ENCODE measurements at regions of chr19 and their contacts with region 1.

Region 1: DNA sequence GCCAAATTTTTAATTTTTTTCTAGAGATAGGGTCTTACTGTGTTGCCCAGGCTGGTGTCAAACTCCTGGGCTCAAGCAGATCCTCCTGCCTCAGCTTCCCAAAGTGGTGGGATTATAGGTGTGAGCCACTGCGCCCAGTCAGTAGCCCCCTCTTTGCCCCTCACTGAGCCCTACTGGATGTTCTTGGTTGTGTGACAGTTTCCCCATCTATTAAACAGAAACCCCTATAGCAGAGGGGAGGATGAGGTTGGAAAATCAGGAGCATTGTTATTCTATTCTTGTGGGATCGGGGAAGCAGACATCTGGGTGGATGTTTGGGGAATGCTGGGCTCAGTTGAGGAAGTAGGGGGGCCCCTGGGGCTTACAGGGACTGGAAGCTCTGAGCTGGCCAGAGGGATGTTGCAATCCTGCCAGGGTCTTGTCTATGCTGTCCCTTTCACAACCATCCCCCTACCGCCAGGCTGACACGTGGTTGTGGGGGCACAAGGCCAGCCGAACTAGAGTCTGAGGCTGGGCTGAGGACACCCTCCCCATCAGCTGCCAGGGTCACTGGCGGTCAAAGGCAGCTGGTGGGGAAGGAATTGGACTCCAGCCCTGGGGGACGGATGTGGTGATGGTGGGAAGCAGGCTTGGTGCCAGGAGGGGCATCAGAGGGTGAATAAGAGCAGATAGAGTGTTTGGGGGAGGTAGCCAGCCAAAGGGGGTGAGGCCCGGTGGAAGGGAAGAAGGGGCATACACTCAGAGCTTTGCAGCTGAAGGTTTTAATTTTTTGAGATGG is 10.9 kb downstream of the APOC1 start:
- DNase-seq: no peak
- H3K4me3 ChIP-seq: no peak overlapping the region
- H3K27ac ChIP-seq: no peak overlapping the region
- H3K4me1 ChIP-seq: peaks cover 0 to 5% (median 0%) of the 10 kb centered on the region in 4 experiments; a peak in 2 of 7 replicates
- H3K27me3 ChIP-seq: peaks cover 0 to 1% (median 0%) of the 10 kb centered on the region in 4 experiments; a peak in 1 of 7 replicates
- CTCF ChIP-seq: no peak
- EP300 ChIP-seq: no peak
- POLR2A ChIP-seq: no peak
- RAD21 ChIP-seq: no peak

Region 2: DNA sequence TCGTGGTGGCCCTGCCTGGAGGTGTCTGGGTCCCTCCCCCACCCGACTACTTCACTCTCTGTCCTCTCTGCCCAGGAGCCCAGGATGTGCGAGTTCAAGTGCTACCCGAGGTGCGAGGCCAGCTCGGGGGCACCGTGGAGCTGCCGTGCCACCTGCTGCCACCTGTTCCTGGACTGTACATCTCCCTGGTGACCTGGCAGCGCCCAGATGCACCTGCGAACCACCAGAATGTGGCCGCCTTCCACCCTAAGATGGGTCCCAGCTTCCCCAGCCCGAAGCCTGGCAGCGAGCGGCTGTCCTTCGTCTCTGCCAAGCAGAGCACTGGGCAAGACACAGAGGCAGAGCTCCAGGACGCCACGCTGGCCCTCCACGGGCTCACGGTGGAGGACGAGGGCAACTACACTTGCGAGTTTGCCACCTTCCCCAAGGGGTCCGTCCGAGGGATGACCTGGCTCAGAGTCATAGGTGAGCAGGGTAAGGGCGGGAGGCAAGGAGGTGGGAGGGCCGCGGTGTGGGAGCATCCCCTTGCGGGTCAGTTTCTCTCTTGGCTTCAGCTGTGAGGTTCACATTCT is 60.0 kb before region 1 on chr19:
- CTCF ChIA-PET with region 1: no interaction called
- POLR2A ChIA-PET with region 1: no interaction called
- DNase-seq: no peak
- H3K4me3 ChIP-seq: no peak overlapping the region
- H3K27ac ChIP-seq: no peak overlapping the region
- H3K4me1 ChIP-seq: no peaks in the 10 kb centered on the region
- H3K27me3 ChIP-seq: no peaks in the 10 kb centered on the region
- CTCF ChIP-seq: no peak
- EP300 ChIP-seq: no peak
- POLR2A ChIP-seq: no peak
- RAD21 ChIP-seq: no peak

Region 3: DNA sequence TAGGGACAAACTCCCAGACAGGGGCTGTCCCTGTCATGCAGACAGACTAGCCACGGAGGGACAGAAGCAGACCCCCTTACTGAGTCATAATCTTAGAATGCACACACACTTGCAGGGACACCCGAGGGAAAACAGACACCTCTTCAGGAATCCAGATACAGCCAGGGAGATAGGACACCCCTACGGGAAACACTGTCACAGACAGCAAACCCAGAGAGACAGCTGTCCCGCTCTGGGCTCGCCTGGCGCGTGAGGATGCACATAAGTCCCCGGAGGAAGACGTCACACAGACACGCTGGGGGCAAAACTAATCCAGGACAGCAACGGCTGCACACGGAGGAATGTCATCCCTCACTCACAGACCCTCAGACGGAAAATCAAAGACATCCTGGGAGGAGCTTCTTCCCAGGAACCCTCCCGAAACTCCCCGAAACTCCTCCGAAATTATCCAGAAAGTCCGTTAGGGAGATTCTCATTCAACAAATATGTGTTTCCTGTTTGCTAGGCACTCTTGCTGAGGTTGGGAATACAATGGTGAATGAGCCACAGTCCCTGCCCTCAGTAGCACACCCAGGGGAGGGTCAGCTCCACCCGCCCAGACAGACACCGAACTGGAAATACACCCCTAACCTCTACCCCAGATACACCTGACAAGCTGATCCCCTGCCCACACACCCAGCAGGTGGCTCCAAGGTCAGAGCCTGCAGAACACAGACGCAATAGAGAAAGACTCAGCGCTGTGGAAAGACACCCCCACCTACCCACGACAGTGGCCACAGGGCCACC is 49.4 kb before region 1 on chr19:
- CTCF ChIA-PET with region 1: no interaction called
- POLR2A ChIA-PET with region 1: no interaction called
- DNase-seq: no peak
- H3K4me3 ChIP-seq: no peak overlapping the region
- H3K27ac ChIP-seq: no peak overlapping the region
- H3K4me1 ChIP-seq: peaks cover 0 to 20% (median 3%) of the 10 kb centered on the region in 4 experiments; a peak in 5 of 7 replicates
- H3K27me3 ChIP-seq: no peaks in the 10 kb centered on the region
- CTCF ChIP-seq: no peak
- EP300 ChIP-seq: no peak
- POLR2A ChIP-seq: no peak
- RAD21 ChIP-seq: no peak

Region 4: GRCh38 chr19:44912854-44913253 is 12.4 kb before region 1 on chr19:
- CTCF ChIA-PET with region 1: interaction called, 4 read pairs
- POLR2A ChIA-PET with region 1: interaction called, 15 read pairs
- DNase-seq: no peak
- H3K4me3 ChIP-seq: no peak overlapping the region
- H3K27ac ChIP-seq: no peak overlapping the region
- H3K4me1 ChIP-seq: peaks cover 4 to 17% (median 6%) of the 10 kb centered on the region in 4 experiments
- H3K27me3 ChIP-seq: no peaks in the 10 kb centered on the region
- CTCF ChIP-seq: no peak
- EP300 ChIP-seq: no peak
- POLR2A ChIP-seq: no peak
- RAD21 ChIP-seq: no peak